Activated T-helper 1 cell treated with anti-CD3 and anti-CD28 coated beads, Interleukin-12 subunit alpha, Interleukin-12 subunit beta, Interleukin-2, Interleukin-4 antibody, amounts not matched to agents 30 ng/mL and 10 ng/mL and 1 ng/mL, durations not matched to agents 14 hours and 24 hours and 36 hours (primary cell): ENCODE measurements at regions of chr7 and their contacts with region 1.

Region 1: GRCh38 chr7:44797329-44798251 is 1.1 kb downstream of the PPIA start:
- DNase-seq: peak; percentile 81
- H3K4me3 Mint-ChIP-seq: peak overlapping the region; percentile 94
- H3K27ac Mint-ChIP-seq: peak overlapping the region; percentile 94
- H3K4me1 Mint-ChIP-seq: peaks cover 34% of the 10 kb centered on the region
- H3K27me3 Mint-ChIP-seq: no peaks in the 10 kb centered on the region

Region 2: DNA sequence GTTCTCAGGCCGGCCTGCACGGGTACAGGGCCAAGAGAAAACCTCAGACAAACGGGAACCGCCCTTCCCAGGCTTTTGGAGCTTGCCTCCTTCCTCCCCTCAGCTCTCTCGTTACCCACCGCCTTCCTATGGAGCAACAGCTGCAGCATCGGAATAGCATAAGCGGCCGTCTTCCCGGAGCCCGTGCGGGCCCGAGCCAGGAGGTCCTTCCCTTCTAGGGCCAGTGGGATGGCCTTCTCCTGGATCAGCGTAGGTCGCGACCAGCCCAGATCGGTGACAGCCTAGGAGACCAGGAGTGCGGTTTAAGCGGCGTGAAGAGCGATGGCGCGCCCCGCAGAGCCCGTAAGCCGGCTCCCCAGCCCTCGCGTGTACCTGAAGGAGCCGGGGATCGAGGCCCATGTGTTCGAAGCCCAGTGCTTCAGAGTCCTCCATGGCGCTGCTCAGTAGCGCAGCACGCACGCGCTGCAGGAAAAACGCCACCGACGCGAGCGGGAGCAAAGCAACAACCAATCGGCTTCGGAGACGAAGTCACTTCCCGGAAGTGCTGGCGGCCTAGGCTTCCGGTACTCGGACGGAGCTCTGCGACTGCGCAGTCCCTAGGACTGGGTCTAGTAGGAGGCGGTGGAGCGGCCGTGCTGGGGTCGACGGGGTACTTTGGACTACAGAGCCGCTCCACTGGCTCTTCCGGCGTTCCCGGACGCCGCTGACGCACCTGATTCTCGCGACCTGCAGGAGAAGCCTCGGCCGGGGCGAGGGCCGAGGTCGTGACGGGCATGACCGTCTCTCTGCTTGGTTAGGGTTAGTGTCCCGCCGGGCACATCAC is 223.9 kb before region 1 on chr7 and contains the start of gene DDX56:
- intact Hi-C with region 1: loop called (anchors 2 kb)
- DNase-seq: peak; percentile 93
- H3K4me3 Mint-ChIP-seq: peak within 1 kb of the TSS; percentile 88
- H3K27ac Mint-ChIP-seq: peak within 1 kb of the TSS; percentile 95
- H3K4me1 Mint-ChIP-seq: peaks cover 32% of the 10 kb centered on the region
- H3K27me3 Mint-ChIP-seq: no peaks in the 10 kb centered on the region
- total RNA-seq, gene DDX56: 165 and 166 TPM in 2 replicates

Region 3: GRCh38 chr7:44638611-44639557 is 158.7 kb before region 1 on chr7:
- intact Hi-C with region 1: loop called (anchors 1 kb)
- DNase-seq: peak; percentile 84
- H3K4me3 Mint-ChIP-seq: peak overlapping the region; percentile 82
- H3K27ac Mint-ChIP-seq: peak overlapping the region; percentile 100
- H3K4me1 Mint-ChIP-seq: peaks cover 81% of the 10 kb centered on the region
- H3K27me3 Mint-ChIP-seq: no peaks in the 10 kb centered on the region

Region 4: GRCh38 chr7:44827567-44827966 is 30.0 kb after region 1 on chr7:
- intact Hi-C with region 1: no loop called
- DNase-seq: no peak
- H3K4me3 Mint-ChIP-seq: no peak overlapping the region
- H3K27ac Mint-ChIP-seq: no peak overlapping the region
- H3K4me1 Mint-ChIP-seq: peaks cover 9% of the 10 kb centered on the region
- H3K27me3 Mint-ChIP-seq: no peaks in the 10 kb centered on the region

Region 5: DNA sequence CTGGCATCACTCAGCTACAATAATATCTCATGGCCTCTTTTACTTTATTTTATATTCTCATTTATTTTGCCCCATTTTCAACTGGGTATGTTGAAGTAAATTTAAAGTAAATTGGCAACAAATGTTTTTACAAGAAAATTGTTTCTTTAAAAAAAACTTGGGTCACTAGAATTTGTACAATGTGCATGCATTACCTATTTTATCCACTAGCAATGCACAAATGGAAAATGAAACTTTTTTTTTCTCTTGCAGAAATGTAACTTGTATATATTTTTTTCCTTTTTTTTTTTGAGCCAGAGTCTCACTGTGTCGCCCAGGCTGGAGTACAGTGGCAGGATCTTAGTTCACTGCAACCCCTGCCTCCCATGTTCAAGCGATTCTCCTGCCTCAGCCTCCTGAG is 60.6 kb after region 1 on chr7:
- intact Hi-C with region 1: loop called (anchors 2 kb)
- DNase-seq: no peak
- H3K4me3 Mint-ChIP-seq: no peak overlapping the region
- H3K27ac Mint-ChIP-seq: no peak overlapping the region
- H3K4me1 Mint-ChIP-seq: peaks cover 17% of the 10 kb centered on the region
- H3K27me3 Mint-ChIP-seq: peaks cover 2% of the 10 kb centered on the region

Region 6: DNA sequence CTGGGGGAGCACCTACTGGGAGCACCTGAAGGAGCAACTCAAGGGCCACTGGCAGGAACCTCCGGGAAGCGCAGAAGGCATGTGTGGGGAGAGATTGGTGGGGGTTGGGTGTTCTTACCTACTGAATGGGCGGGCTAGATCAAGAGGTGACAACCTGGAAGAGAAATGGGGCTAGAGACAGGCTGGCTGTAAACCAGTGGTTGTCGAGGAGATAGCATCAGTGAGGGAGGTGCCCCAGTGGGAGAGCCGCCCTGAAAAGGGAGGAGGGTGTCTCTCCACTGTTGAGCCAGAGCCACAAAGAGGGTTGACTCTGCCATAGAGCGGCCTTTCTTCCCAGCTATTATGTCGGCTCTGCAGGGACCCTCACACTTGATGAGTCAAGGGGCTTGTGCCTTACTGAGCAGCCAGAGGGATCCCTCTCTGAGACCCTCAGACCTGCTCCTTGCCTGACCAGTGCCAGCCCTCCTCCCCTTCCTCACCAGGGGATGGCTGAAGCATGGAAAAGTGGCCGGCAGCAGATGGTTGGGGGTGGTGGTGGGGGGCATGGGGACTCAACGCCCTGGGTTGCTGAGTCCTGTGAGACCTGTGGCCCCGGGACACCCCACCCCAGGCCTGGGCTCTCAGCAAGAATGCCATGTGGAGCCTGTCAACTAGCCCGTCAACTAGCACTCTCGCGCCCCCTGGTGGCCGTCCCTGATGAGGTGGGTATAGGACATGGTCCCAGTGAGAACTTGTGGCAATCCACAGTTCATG is 124.2 kb after region 1 on chr7:
- intact Hi-C with region 1: loop called (anchors 1 kb)
- DNase-seq: peak; percentile 86
- H3K4me3 Mint-ChIP-seq: no peak overlapping the region
- H3K27ac Mint-ChIP-seq: peak overlapping the region; percentile 79
- H3K4me1 Mint-ChIP-seq: peaks cover 15% of the 10 kb centered on the region
- H3K27me3 Mint-ChIP-seq: peaks cover 7% of the 10 kb centered on the region

Region 7: GRCh38 chr7:45111298-45112223 is 314.0 kb after region 1 on chr7 and contains the start of gene TBRG4:
- intact Hi-C with region 1: loop called (anchors 2 kb)
- DNase-seq: peak; percentile 94
- H3K4me3 Mint-ChIP-seq: peak within 1 kb of the TSS; percentile 96
- H3K27ac Mint-ChIP-seq: peak within 1 kb of the TSS; percentile 97
- H3K4me1 Mint-ChIP-seq: peaks cover 39% of the 10 kb centered on the region
- H3K27me3 Mint-ChIP-seq: peaks cover 12% of the 10 kb centered on the region
- total RNA-seq, gene TBRG4: 176 and 195 TPM in 2 replicates